Mammary epithelial cell (primary cell): ENCODE measurements at regions of chr4 and their contacts with region 1.

Region 1: DNA sequence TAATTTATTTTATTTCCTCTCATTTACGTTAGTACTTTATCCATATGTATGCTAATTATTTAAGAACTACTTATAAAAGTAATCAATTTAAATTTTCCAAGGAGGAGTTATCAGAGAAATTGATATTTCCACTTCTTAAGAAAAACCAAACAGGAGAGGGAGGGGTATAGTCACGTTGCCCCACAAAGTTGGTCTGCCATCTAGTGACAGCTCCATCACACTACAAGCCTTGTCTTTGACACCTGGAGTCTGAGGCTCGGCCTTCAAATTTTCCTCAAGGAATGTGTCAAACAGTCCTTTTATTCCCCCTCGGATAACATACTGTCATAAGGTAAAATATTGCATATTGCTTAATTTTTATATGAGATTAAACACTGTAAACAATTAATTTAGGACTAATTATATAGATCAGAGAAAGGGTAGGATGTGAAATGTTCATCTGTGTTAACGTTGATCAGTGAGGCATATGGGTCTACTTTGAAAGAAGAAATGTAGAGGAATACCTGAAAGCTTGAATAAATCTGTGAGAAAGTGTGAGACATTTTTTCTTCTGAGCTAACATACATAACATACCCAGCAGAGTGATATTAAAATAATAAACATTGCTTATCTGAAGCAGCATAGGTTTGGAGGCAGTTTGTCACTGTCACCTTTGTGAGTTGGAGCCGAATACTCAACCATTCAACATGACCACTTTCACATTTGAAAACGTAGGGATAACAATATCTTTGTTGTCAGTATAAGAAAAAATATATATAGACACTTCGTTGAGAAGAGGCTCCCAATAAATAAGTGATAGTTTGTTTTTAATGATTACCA is 114.4 kb downstream of the GLRA3 start:
- DNase-seq: peak; percentile 36
- H3K4me3 ChIP-seq: no peak overlapping the region
- H3K27ac ChIP-seq: no peak overlapping the region
- H3K4me1 ChIP-seq: no peaks in the 10 kb centered on the region
- H3K27me3 ChIP-seq: no peaks in the 10 kb centered on the region
- CTCF ChIP-seq: peak; percentile 78 to 90

Region 2: GRCh38 chr4:174365018-174365587 is 349.5 kb before region 1 on chr4:
- CTCF ChIA-PET with region 1: no interaction called
- dilution Hi-C with region 1: no loop called
- in situ Hi-C with region 1: loop called in 1 of 2 experiments (anchors 25 kb)
- intact Hi-C with region 1: loop called (anchors 1 kb)
- DNase-seq: no peak
- H3K4me3 ChIP-seq: no peak overlapping the region
- H3K27ac ChIP-seq: no peak overlapping the region
- H3K4me1 ChIP-seq: no peaks in the 10 kb centered on the region
- H3K27me3 ChIP-seq: no peaks in the 10 kb centered on the region
- CTCF ChIP-seq: peak; percentile 34 to 39

Region 3: GRCh38 chr4:174522183-174523048 is 192.2 kb before region 1 on chr4 and contains the start of gene HPGD:
- CTCF ChIA-PET with region 1: no interaction called
- dilution Hi-C with region 1: no loop called
- in situ Hi-C with region 1: no loop called
- intact Hi-C with region 1: loop called (anchors 10 kb)
- DNase-seq: peak; percentile 20
- H3K4me3 ChIP-seq: peak within 1 kb of the TSS; percentile 51 to 60 (median 59)
- H3K27ac ChIP-seq: no peak within 1 kb of the TSS
- H3K4me1 ChIP-seq: peaks cover 7% of the 10 kb centered on the region
- H3K27me3 ChIP-seq: peaks cover 8% of the 10 kb centered on the region
- CTCF ChIP-seq: no peak
- total RNA-seq, gene HPGD: 0.24 to 1.2 TPM

Region 4: GRCh38 chr4:174648812-174649211 is 65.8 kb before region 1 on chr4:
- CTCF ChIA-PET with region 1: no interaction called
- dilution Hi-C with region 1: no loop called
- in situ Hi-C with region 1: no loop called
- intact Hi-C with region 1: loop called (anchors 5 kb)
- DNase-seq: no peak
- H3K4me3 ChIP-seq: no peak overlapping the region
- H3K27ac ChIP-seq: no peak overlapping the region
- H3K4me1 ChIP-seq: no peaks in the 10 kb centered on the region
- H3K27me3 ChIP-seq: peaks cover 2% of the 10 kb centered on the region
- CTCF ChIP-seq: no peak